ENCODE measurements at regions of chr21 and their contacts with region 1.

Region 1: DNA sequence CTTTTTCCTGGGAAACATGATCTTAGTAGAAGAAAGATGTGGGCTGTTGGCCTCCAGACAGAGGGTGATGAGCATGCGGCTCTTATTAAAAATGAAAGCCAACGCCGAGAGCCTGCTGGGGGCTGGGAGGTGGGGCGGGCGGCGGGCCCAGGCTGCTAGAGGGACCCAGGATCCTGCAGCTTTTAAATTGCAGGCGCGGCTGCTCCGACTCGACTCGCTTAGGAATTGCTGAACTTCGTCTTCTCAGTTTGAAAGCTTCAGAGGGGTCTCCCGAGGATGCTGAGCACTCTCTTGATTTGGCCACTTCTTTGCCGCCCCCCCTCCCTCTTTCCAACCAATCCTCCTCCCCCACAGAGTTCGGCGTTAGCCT is 1.2 kb downstream of the AGPAT3 start:
- DNase-seq: no peak
- ATAC-seq: peak; percentile 70
- H3K4me3 ChIP-seq: peak overlapping the region; percentile 75
- H3K27ac ChIP-seq: peak overlapping the region; percentile 85
- H3K4me1 ChIP-seq: peaks cover 20% of the 10 kb centered on the region
- H3K27me3 ChIP-seq: no peaks in the 10 kb centered on the region
- CTCF ChIP-seq: no peak
- EP300 ChIP-seq: no peak
- POLR2A ChIP-seq: no peak
- RAD21 ChIP-seq: no peak

Region 2: GRCh38 chr21:43816611-43817478 is 49.4 kb before region 1 on chr21:
- CTCF ChIA-PET with region 1: interaction called, 5 read pairs
- POLR2A ChIA-PET with region 1: interaction called, 8 read pairs
- RAD21 ChIA-PET with region 1: no interaction called
- SMC1A ChIA-PET with region 1: interaction called, 10 read pairs
- in situ Hi-C with region 1: no loop called
- intact Hi-C with region 1: no loop called
- DNase-seq: no peak
- ATAC-seq: peak; percentile 32
- H3K4me3 ChIP-seq: no peak overlapping the region
- H3K27ac ChIP-seq: no peak overlapping the region
- H3K4me1 ChIP-seq: peaks cover 6% of the 10 kb centered on the region
- H3K27me3 ChIP-seq: no peaks in the 10 kb centered on the region
- CTCF ChIP-seq: peak in 2 of 3 experiments; percentile 11 to 22; a peak in 3 of 6 replicates
- EP300 ChIP-seq: no peak
- POLR2A ChIP-seq: no peak
- RAD21 ChIP-seq: no peak

Region 3: GRCh38 chr21:43884012-43884860 is 18.0 kb after region 1 on chr21:
- CTCF ChIA-PET with region 1: interaction called, 5 read pairs
- POLR2A ChIA-PET with region 1: interaction called, 5 read pairs
- RAD21 ChIA-PET with region 1: interaction called, 6 read pairs
- SMC1A ChIA-PET with region 1: interaction called, 13 read pairs
- in situ Hi-C with region 1: no loop called
- intact Hi-C with region 1: no loop called
- DNase-seq: no peak
- ATAC-seq: peak; percentile 92
- H3K4me3 ChIP-seq: peak overlapping the region; percentile 31; the same call in 1 of the 2 replicates
- H3K27ac ChIP-seq: 0 out of 2 replicates have a peak overlapping the region, but pooled peaks have one; percentile 55
- H3K4me1 ChIP-seq: peaks cover 24% of the 10 kb centered on the region
- H3K27me3 ChIP-seq: no peaks in the 10 kb centered on the region
- CTCF ChIP-seq: no peak
- EP300 ChIP-seq: no peak
- POLR2A ChIP-seq: no peak
- RAD21 ChIP-seq: no peak

Region 4: GRCh38 chr21:43921979-43922945 is 56.0 kb after region 1 on chr21:
- CTCF ChIA-PET with region 1: interaction called, 10 read pairs
- POLR2A ChIA-PET with region 1: interaction called, 11 read pairs
- RAD21 ChIA-PET with region 1: interaction called, 18 read pairs
- SMC1A ChIA-PET with region 1: interaction called, 12 read pairs
- in situ Hi-C with region 1: no loop called
- intact Hi-C with region 1: loop called (anchors 2 kb)
- DNase-seq: peak; percentile 69
- ATAC-seq: peak; percentile 61
- H3K4me3 ChIP-seq: 0 out of 2 replicates have a peak overlapping the region, but pooled peaks have one; percentile 6
- H3K27ac ChIP-seq: peak overlapping the region; percentile 92
- H3K4me1 ChIP-seq: peaks cover 27% of the 10 kb centered on the region
- H3K27me3 ChIP-seq: no peaks in the 10 kb centered on the region
- CTCF ChIP-seq: no peak
- EP300 ChIP-seq: peak; percentile 69 to 75; a peak in 3 of 4 replicates
- POLR2A ChIP-seq: peak; percentile 80
- RAD21 ChIP-seq: no peak